ENCODE measurements at regions of chr16 and their contacts with region 1.

Region 1: DNA sequence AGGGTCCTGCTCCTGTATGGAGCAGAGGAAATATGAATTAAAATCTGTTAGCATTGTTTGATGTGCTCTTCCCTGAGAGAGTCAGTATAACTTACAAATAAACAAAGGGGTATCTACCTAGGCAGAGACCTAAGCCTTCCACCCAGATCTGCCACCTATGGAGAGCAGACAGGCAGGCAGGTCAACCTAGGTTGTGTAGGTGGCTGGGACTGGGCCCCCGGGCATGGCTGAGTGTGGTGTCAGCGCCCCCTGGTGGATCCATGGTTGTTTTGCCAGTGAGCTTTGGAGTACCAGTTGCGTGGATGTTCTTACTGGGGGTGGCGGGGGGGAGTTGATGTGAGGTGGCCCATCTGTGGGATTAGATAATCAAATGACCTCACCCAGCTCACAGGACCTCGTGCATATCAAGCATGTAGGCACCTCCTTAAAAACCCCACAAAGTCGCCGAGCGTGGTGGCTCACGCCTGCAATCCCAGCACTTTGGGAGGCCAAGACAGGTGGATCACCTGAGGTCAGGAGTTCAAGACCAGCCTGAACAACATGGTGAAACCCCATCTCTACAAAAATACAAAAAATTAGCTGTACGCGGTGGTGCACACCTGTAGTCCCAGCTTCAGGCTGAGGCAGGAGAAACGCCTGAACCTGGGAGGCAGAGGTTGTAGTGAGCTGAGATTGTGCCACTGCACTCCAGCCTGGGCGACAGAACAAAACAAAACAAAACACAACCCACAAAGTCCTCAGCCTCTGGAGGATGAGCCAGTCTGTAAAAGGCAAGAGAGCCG is 17.6 kb downstream of the DUS2 start:
- DNase-seq: peak; percentile 92
- H3K4me3 Mint-ChIP-seq: no peak overlapping the region
- H3K27ac Mint-ChIP-seq: peak overlapping the region; percentile 25
- H3K4me1 Mint-ChIP-seq: peaks cover 30% of the 10 kb centered on the region
- H3K27me3 Mint-ChIP-seq: no peaks in the 10 kb centered on the region

Region 2: GRCh38 chr16:67892899-67893742 is 147.6 kb before region 1 on chr16 and contains the start of gene PSKH1:
- CTCF ChIA-PET with region 1: no interaction called
- POLR2A ChIA-PET with region 1: no interaction called
- DNase-seq: peak; percentile 95
- H3K4me3 Mint-ChIP-seq: peak within 1 kb of the TSS; percentile 92
- H3K27ac Mint-ChIP-seq: peak within 1 kb of the TSS; percentile 99
- H3K4me1 Mint-ChIP-seq: peaks cover 29% of the 10 kb centered on the region
- H3K27me3 Mint-ChIP-seq: no peaks in the 10 kb centered on the region
- total RNA-seq, gene PSKH1: 21.3 to 21.5 TPM

Region 3: GRCh38 chr16:67999985-68000384 is 40.7 kb before region 1 on chr16:
- CTCF ChIA-PET with region 1: interaction called, 12 read pairs
- POLR2A ChIA-PET with region 1: no interaction called
- DNase-seq: no peak
- H3K4me3 Mint-ChIP-seq: peak overlapping the region; percentile 72
- H3K27ac Mint-ChIP-seq: peak overlapping the region; percentile 93
- H3K4me1 Mint-ChIP-seq: peaks cover 46% of the 10 kb centered on the region
- H3K27me3 Mint-ChIP-seq: no peaks in the 10 kb centered on the region

Region 4: GRCh38 chr16:68022704-68023522 is 17.8 kb before region 1 on chr16 and contains the starts of genes DDX28 and DUS2:
- CTCF ChIA-PET with region 1: interaction called, 10 read pairs
- POLR2A ChIA-PET with region 1: no interaction called
- DNase-seq: peak; percentile 92
- H3K4me3 Mint-ChIP-seq: peak within 1 kb of the TSS; percentile 96
- H3K27ac Mint-ChIP-seq: peak within 1 kb of the TSS; percentile 95
- H3K4me1 Mint-ChIP-seq: peaks cover 34% of the 10 kb centered on the region
- H3K27me3 Mint-ChIP-seq: no peaks in the 10 kb centered on the region
- total RNA-seq, gene DDX28: 12.9 to 14.4 TPM
- total RNA-seq, gene DUS2: 21.5 to 23.4 TPM

Region 5: DNA sequence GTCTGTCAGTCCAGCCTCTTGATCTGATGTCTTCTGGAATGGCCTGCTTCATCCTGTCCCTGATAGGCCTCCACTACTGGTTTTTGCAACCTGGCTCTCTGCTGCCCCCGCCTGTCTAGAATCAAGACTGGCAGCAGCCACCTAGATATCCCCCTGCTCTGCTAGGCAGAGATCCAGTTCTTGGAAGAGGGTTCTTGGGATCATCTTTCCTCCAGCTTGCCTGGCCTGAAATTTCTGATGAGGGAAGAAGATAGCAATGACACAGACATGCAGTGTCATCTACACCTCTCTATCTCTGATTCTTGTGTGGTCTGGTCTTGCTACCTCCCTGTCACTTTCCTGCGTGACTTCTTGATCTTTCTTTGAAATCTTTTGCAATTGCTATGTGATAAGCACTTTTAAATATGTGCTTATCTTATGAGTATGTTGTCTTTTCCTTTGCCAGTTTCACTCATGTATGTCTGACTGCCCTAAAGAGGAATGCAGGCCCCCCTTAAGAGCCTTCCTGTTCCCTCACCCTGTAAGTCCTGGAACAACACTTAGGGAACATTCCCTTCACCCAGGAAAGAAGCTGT is 24.2 kb after region 1 on chr16:
- CTCF ChIA-PET with region 1: interaction called, 14 read pairs
- POLR2A ChIA-PET with region 1: no interaction called
- DNase-seq: peak; percentile 81
- H3K4me3 Mint-ChIP-seq: no peak overlapping the region
- H3K27ac Mint-ChIP-seq: peak overlapping the region; percentile 89
- H3K4me1 Mint-ChIP-seq: peaks cover 84% of the 10 kb centered on the region
- H3K27me3 Mint-ChIP-seq: no peaks in the 10 kb centered on the region

Measured in activated CD4-positive, alpha-beta T cell treated with anti-CD3 and anti-CD28 coated beads, Interleukin-2, amount 10 ng/mL, durations not matched to agents 7 days and 5 days (primary cell).